ENCODE measurements at regions of chr19 and their contacts with region 1.

Region 1: GRCh38 chr19:1241417-1242095 is at the start of gene ATP5F1D:
- DNase-seq: peak; percentile 95
- H3K4me3 Mint-ChIP-seq: peak within 1 kb of the TSS; percentile 78
- H3K27ac Mint-ChIP-seq: peak within 1 kb of the TSS; percentile 88
- H3K4me1 Mint-ChIP-seq: peaks cover 48% of the 10 kb centered on the region
- H3K27me3 Mint-ChIP-seq: peaks cover 33% of the 10 kb centered on the region

Region 2: DNA sequence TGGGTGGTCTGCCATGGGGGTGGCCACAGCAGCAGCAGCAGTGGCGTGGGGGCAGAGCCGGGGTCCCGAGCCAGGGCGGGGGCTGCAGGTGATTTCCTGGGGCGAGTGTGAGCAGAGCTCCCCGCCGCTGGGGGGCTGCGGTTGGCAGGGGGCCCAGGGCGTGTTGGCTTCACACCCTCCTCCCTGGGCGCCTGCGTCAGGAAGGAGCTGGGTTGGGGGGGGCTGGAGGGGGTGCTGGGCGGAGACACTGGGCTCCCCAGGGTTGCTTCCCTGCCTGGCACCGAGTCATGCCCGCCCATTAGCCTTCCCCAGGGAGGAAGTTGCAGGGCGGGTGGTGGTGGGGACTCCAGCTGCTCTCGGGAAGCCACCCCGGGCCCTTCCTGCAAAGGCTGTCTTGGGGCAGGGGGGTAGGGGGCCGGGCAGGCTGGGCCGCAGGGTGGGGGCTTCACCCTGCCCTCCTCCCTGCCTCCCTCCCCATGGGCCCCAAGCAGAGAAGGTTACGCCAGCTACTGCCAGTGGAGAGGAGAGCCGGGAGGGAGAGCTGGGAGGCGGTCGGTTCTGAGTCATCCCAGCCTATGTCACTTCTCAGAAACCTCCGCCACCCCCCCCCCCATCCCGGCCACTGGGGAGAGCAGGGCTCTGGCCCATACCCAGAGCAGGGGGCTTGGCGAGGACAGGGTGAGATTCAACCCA is 11.4 kb after region 1 on chr19:
- CTCF ChIA-PET with region 1: interaction called, 19 read pairs
- DNase-seq: peak; percentile 88
- H3K4me3 Mint-ChIP-seq: peak overlapping the region; percentile 95
- H3K27ac Mint-ChIP-seq: peak overlapping the region; percentile 84
- H3K4me1 Mint-ChIP-seq: peaks cover 23% of the 10 kb centered on the region
- H3K27me3 Mint-ChIP-seq: no peaks in the 10 kb centered on the region

Region 3: GRCh38 chr19:1260636-1261537 is 19.3 kb after region 1 on chr19:
- CTCF ChIA-PET with region 1: interaction called, 295 read pairs
- DNase-seq: peak; percentile 97
- H3K4me3 Mint-ChIP-seq: peak overlapping the region; percentile 94
- H3K27ac Mint-ChIP-seq: peak overlapping the region; percentile 98
- H3K4me1 Mint-ChIP-seq: peaks cover 65% of the 10 kb centered on the region
- H3K27me3 Mint-ChIP-seq: no peaks in the 10 kb centered on the region

Region 4: GRCh38 chr19:1269065-1269477 is 27.5 kb after region 1 on chr19 and contains the start of gene CIRBP:
- CTCF ChIA-PET with region 1: interaction called, 295 read pairs
- DNase-seq: peak; percentile 100
- H3K4me3 Mint-ChIP-seq: peak within 1 kb of the TSS; percentile 87
- H3K27ac Mint-ChIP-seq: peak within 1 kb of the TSS; percentile 90
- H3K4me1 Mint-ChIP-seq: peaks cover 71% of the 10 kb centered on the region
- H3K27me3 Mint-ChIP-seq: peaks cover 9% of the 10 kb centered on the region

Region 5: DNA sequence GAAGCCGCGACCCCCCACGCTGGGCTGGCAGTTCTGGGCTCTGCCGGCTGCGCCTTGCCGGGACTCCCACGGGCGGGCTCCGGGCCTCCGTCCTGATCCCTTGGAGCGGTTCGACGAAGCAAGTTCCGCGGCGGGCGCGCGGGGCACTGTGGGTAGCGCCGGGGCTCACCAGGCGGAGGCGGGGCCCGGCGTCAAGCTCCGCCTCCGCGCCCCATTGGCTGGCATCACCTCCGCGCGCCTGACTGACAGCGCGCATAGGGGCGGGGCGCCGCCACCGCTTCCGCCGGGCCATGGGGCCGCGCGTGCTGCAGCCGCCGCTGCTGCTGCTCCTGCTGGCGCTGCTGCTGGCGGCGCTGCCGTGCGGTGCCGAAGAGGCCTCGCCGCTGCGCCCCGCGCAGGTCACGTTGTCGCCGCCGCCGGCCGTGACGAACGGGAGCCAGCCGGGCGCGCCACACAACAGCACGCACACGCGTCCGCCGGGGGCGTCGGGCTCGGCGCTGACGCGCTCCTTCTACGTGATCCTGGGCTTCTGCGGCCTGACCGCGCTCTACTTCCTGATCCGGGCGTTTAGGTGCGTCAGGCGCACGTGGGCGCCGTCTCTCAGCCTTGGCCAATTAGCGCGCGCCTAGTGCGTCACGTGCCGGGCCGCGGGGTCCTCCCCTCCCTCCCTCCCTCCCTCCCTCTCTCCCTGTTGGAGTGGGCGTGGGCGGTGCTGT is 33.9 kb after region 1 on chr19 and contains the start of gene FAM174C:
- CTCF ChIA-PET with region 1: interaction called, 31 read pairs
- DNase-seq: peak; percentile 97
- H3K4me3 Mint-ChIP-seq: peak within 1 kb of the TSS; percentile 89
- H3K27ac Mint-ChIP-seq: peak within 1 kb of the TSS; percentile 99
- H3K4me1 Mint-ChIP-seq: peaks cover 57% of the 10 kb centered on the region
- H3K27me3 Mint-ChIP-seq: no peaks in the 10 kb centered on the region

Measured in activated naive CD4-positive, alpha-beta T cell treated with anti-CD3 and anti-CD28 coated beads, Interleukin-2, amount 10 ng/mL, durations not matched to agents 7 days and 5 days (primary cell).